Mammary epithelial cell (primary cell): ENCODE measurements at regions of chr5 and their contacts with region 1.

Region 1: GRCh38 chr5:110790673-110791072 is 51.9 kb downstream of the SLC25A46 start:
- DNase-seq: peak; percentile 20
- H3K4me3 ChIP-seq: no peak overlapping the region
- H3K27ac ChIP-seq: no peak overlapping the region
- H3K4me1 ChIP-seq: peaks cover under 1% of the 10 kb centered on the region
- H3K27me3 ChIP-seq: no peaks in the 10 kb centered on the region
- CTCF ChIP-seq: peak in 1 of 2 donors; percentile 52

Region 2: GRCh38 chr5:110865400-110866094 is 74.9 kb after region 1 on chr5:
- CTCF ChIA-PET with region 1: no interaction called
- dilution Hi-C with region 1: no loop called
- in situ Hi-C with region 1: no loop called
- intact Hi-C with region 1: loop called (anchors 1 kb)
- DNase-seq: peak; percentile 58
- H3K4me3 ChIP-seq: no peak overlapping the region
- H3K27ac ChIP-seq: no peak overlapping the region
- H3K4me1 ChIP-seq: no peaks in the 10 kb centered on the region
- H3K27me3 ChIP-seq: no peaks in the 10 kb centered on the region
- CTCF ChIP-seq: peak; percentile 88 to 89

Region 3: GRCh38 chr5:110880413-110880812 is 89.7 kb after region 1 on chr5:
- CTCF ChIA-PET with region 1: no interaction called
- dilution Hi-C with region 1: no loop called
- in situ Hi-C with region 1: no loop called
- intact Hi-C with region 1: no loop called
- DNase-seq: peak; percentile 95
- H3K4me3 ChIP-seq: no peak overlapping the region
- H3K27ac ChIP-seq: peak overlapping the region; percentile 51
- H3K4me1 ChIP-seq: peaks cover 8% of the 10 kb centered on the region
- H3K27me3 ChIP-seq: no peaks in the 10 kb centered on the region
- CTCF ChIP-seq: no peak